ENCODE measurements at regions of chr2 and their contacts with region 1.

Region 1: GRCh38 chr2:47906157-47907038 is at the start of gene FBXO11:
- DNase-seq: peak; percentile 98
- ATAC-seq: peak; percentile 81
- H3K4me3 ChIP-seq: peak within 1 kb of the TSS; percentile 86
- H3K27ac ChIP-seq: peak within 1 kb of the TSS; percentile 90
- H3K4me1 ChIP-seq: peaks cover 14% of the 10 kb centered on the region
- H3K27me3 ChIP-seq: no peaks in the 10 kb centered on the region
- CTCF ChIP-seq: peak; percentile 65
- total RNA-seq, gene FBXO11: 34.8 and 39.6 TPM in 2 replicates

Region 2: GRCh38 chr2:47344890-47345589 is 561.4 kb before region 1 on chr2:
- CTCF ChIA-PET with region 1: no interaction called
- POLR2A ChIA-PET with region 1: no interaction called
- intact Hi-C with region 1: no loop called
- DNase-seq: peak; percentile 90
- ATAC-seq: peak; percentile 95
- H3K4me3 ChIP-seq: peak overlapping the region; percentile 79
- H3K27ac ChIP-seq: peak overlapping the region; percentile 70
- H3K4me1 ChIP-seq: peaks cover 34% of the 10 kb centered on the region
- H3K27me3 ChIP-seq: no peaks in the 10 kb centered on the region
- CTCF ChIP-seq: peak; percentile 17; the same call in 1 of the 2 replicates

Region 3: DNA sequence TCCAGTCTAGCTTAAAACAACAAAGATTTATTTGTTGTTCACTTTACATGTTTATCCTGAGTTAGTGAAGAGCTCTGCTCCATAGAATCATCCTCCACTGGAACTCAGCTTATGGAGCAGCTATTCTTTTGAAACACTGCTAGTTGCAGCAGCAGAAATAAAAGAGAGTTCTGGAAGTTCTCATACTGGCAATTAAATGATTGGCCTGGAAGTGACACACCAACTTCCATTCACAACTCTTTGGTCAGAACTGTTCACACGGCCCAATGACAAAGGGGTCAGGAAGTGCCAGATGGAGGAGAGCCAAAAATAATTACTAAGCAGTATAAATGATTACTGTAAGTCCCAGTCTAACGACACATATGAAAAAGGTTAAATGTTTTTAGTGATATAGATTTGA is 39.2 kb before region 1 on chr2:
- CTCF ChIA-PET with region 1: no interaction called
- POLR2A ChIA-PET with region 1: interaction called, 5 read pairs
- intact Hi-C with region 1: loop called (anchors 5 kb)
- DNase-seq: peak; percentile 76
- ATAC-seq: peak; percentile 89
- H3K4me3 ChIP-seq: no peak overlapping the region
- H3K27ac ChIP-seq: peak overlapping the region; percentile 16
- H3K4me1 ChIP-seq: peaks cover 12% of the 10 kb centered on the region; the same call in 1 of the 2 replicates
- H3K27me3 ChIP-seq: no peaks in the 10 kb centered on the region
- CTCF ChIP-seq: no peak

Region 4: GRCh38 chr2:47888581-47889280 is 17.7 kb before region 1 on chr2:
- CTCF ChIA-PET with region 1: no interaction called
- POLR2A ChIA-PET with region 1: no interaction called
- intact Hi-C with region 1: no loop called
- DNase-seq: no peak
- ATAC-seq: no peak
- H3K4me3 ChIP-seq: no peak overlapping the region
- H3K27ac ChIP-seq: no peak overlapping the region
- H3K4me1 ChIP-seq: peaks cover 6% of the 10 kb centered on the region; the same call in 1 of the 2 replicates
- H3K27me3 ChIP-seq: no peaks in the 10 kb centered on the region
- CTCF ChIP-seq: no peak

Region 5: DNA sequence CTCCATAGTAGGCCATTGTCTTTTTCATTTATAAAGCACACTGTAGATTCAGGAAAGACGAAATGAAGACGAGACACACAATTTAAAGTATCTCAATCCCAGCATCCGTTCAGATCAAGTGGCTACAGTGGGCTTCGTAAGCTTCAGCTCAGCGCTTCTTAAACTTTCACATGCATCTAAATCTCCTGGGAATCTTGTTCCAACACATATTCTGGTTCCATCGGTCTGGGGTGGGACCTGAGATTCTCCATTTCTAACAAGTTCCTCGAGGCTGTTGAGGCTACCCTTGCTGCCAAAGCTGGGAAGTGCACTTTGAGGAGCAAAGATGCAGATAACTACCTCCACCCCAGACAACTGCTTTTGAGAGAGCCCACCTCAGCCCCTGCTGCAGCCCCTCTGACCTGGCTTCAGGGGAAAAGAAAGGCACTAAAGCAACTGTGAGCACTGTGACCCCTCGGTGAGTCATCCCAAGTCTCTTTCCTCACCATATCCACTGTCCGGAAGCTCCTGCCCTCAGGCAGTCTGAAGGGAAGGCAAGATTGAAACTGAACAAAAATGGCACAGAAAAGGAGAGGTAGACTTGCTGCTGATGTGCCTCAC is 201.0 kb after region 1 on chr2:
- CTCF ChIA-PET with region 1: interaction called, 16 read pairs
- POLR2A ChIA-PET with region 1: interaction called, 3 read pairs
- intact Hi-C with region 1: loop called (anchors 1 kb)
- DNase-seq: peak; percentile 91
- ATAC-seq: peak; percentile 15
- H3K4me3 ChIP-seq: no peak overlapping the region
- H3K27ac ChIP-seq: peak overlapping the region; percentile 91
- H3K4me1 ChIP-seq: peaks cover 54% of the 10 kb centered on the region
- H3K27me3 ChIP-seq: no peaks in the 10 kb centered on the region
- CTCF ChIP-seq: no peak